K562 (cell line): ENCODE measurements at regions of chr1 and their contacts with region 1.

Region 1: DNA sequence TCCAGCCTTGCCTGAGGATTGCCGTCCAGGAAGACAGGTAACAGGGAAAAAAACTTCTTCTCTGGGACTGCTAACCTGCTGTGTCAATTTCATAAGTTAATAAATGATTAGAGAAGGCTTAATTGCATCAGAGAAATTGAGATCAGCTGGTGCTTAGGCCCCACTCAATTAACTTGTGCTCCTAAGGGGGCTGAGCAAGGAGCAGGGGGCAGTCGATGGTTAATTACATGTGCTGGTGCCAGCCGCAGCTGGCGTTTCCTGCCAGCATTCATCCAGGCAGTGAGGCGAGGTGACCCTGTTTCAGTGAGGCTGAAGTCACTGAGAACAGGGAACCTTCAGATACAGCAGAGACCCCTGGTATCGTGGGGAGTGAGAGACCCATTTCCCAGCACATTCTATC is 60.0 kb downstream of the FAM163A start:
- DNase-seq: no peak
- ATAC-seq: no peak
- H3K4me3 ChIP-seq: no peak overlapping the region
- H3K27ac ChIP-seq: no peak overlapping the region
- H3K4me1 ChIP-seq: peaks cover 0 to 4% of the 10 kb centered on the region in 2 experiments; a peak in 1 of 5 replicates
- H3K27me3 ChIP-seq: peaks cover 42 to 74% of the 10 kb centered on the region in 2 experiments
- CTCF ChIP-seq: no peak
- EP300 ChIP-seq: no peak
- POLR2A ChIP-seq: no peak
- RAD21 ChIP-seq: no peak

Region 2: DNA sequence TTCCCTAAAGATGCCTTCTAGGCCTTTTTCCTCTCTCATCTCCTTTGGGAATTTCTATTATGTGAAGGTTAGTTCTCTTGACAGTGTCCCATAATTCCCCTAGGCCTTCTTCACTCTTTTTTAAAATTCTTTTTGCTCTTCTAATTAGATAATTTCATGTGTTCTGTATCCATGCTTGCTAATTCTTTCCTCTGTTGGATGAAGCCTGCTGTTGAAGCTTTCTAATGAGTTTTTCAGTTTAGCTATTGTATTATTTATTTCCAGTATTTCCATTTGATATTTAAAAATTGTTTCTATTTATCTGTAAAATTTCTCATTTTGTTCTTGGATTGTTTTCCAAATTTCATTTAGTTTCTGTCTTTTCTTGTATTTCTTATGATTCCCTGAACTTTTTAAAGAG is 88.5 kb before region 1 on chr1:
- CTCF ChIA-PET with region 1: no interaction called
- POLR2A ChIA-PET with region 1: no interaction called
- in situ Hi-C with region 1: loop called (anchors 5 kb)
- intact Hi-C with region 1: no loop called
- DNase-seq: no peak
- ATAC-seq: no peak
- H3K4me3 ChIP-seq: no peak overlapping the region
- H3K27ac ChIP-seq: no peak overlapping the region
- H3K4me1 ChIP-seq: no peaks in the 10 kb centered on the region
- H3K27me3 ChIP-seq: no peaks in the 10 kb centered on the region
- CTCF ChIP-seq: no peak
- EP300 ChIP-seq: no peak
- POLR2A ChIP-seq: no peak
- RAD21 ChIP-seq: no peak